ENCODE measurements at regions of chr1 and their contacts with region 1.

Region 1: DNA sequence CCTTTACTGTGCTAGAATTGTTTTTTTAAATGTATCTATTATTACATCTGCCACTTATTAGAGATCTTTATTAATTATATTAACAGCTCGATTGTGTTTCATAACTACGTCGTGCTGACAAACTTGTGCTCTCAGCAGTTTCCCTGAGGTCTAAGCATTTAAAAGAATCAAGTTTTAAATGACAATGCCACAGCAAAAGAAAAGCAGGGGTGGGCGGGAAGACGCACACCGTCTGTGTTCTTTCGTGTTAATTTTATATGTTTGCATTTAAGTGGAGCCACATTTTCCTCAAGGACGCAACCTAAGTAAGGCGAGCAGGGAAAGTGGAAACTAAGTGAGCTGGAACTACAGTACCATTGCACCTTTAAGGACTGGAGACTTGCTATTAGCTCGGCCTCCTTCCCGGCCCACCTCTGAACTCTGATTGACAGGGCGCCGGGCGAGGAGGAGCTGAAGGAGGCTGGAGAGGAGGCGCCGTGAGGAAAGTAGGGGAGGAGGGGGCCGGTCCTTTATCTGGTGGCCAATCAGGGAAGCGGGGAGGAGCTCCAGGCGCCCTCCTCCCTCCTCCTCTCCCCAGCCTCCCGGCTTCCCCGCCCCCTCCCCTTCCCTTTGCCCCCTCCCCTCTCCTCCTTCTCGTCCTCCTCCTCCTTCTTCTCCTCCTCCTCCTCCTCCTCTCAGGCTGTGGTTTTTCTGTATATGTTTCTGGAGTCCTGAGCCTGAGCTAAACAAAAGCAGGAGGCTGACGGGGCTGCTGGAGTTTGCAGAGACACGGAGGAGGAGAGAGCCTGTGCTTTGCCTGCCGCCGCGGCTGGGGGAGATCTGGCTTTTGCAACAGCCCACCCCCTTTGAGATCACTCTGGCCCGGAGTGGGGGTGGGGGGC is at the start of gene PBX1:
- DNase-seq: peak; percentile 96

Region 2: GRCh38 chr1:164611754-164612642 is 53.3 kb after region 1 on chr1:
- CTCF ChIA-PET with region 1: no interaction called
- POLR2A ChIA-PET with region 1: interaction called, 12 read pairs
- DNase-seq: peak; percentile 84

Measured in HEK293T (cell line).